Activated B cell treated with CpG ODN at 0.5 μM for 24 hours (primary cell): ENCODE measurements at regions of chr5 and their contacts with region 1.

Region 1: GRCh38 chr5:134411546-134412266 is at the start of gene CDKN2AIPNL:
- DNase-seq: peak; percentile 92
- ATAC-seq: peak; percentile 99
- H3K4me3 Mint-ChIP-seq: peak within 1 kb of the TSS; percentile 95
- H3K27ac Mint-ChIP-seq: peak within 1 kb of the TSS; percentile 85
- H3K4me1 Mint-ChIP-seq: peaks cover 31% of the 10 kb centered on the region
- H3K27me3 Mint-ChIP-seq: no peaks in the 10 kb centered on the region
- CTCF ChIP-seq: no peak
- total RNA-seq, gene CDKN2AIPNL: 21.6 and 22.4 TPM in 2 replicates

Region 2: GRCh38 chr5:134304311-134304710 is 107.4 kb before region 1 on chr5:
- CTCF ChIA-PET with region 1: interaction called, 3 read pairs
- POLR2A ChIA-PET with region 1: no interaction called
- intact Hi-C with region 1: loop called (anchors 10 kb)
- DNase-seq: no peak
- ATAC-seq: no peak
- H3K4me3 Mint-ChIP-seq: no peak overlapping the region
- H3K27ac Mint-ChIP-seq: no peak overlapping the region
- H3K4me1 Mint-ChIP-seq: no peaks in the 10 kb centered on the region
- H3K27me3 Mint-ChIP-seq: no peaks in the 10 kb centered on the region
- CTCF ChIP-seq: no peak

Region 3: DNA sequence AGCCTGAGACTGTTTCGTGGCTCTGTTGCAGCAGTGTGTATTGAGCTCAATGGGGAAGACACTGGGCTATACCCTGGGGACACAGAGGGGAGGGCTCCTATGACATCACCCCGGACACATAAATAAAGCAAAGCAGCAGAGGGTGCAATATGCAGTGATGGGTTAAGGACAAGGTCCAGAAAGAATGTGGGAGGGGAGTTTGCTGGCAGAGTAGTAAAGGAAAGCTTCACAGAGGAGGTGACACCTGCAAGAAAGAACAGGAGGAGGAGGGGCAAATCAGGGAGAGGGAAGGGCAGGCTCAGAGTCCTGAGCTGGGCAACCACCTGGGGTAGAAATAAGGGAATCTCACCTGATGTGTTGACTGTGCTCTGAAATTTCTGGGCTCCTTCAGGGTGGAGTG is 35.2 kb after region 1 on chr5:
- CTCF ChIA-PET with region 1: interaction called, 6 read pairs
- POLR2A ChIA-PET with region 1: interaction called, 5 read pairs
- intact Hi-C with region 1: loop called (anchors 1 kb)
- DNase-seq: peak; percentile 44
- ATAC-seq: peak; percentile 84
- H3K4me3 Mint-ChIP-seq: peak overlapping the region; percentile 13
- H3K27ac Mint-ChIP-seq: peak overlapping the region; percentile 76
- H3K4me1 Mint-ChIP-seq: peaks cover 53% of the 10 kb centered on the region
- H3K27me3 Mint-ChIP-seq: no peaks in the 10 kb centered on the region
- CTCF ChIP-seq: no peak

Region 4: GRCh38 chr5:134555890-134556311 is 144.2 kb after region 1 on chr5:
- CTCF ChIA-PET with region 1: interaction called, 11 read pairs
- POLR2A ChIA-PET with region 1: interaction called, 24 read pairs
- intact Hi-C with region 1: loop called (anchors 1 kb)
- DNase-seq: peak; percentile 75
- ATAC-seq: peak; percentile 73
- H3K4me3 Mint-ChIP-seq: peak overlapping the region; percentile 75
- H3K27ac Mint-ChIP-seq: peak overlapping the region; percentile 98
- H3K4me1 Mint-ChIP-seq: peaks cover 64% of the 10 kb centered on the region
- H3K27me3 Mint-ChIP-seq: no peaks in the 10 kb centered on the region
- CTCF ChIP-seq: no peak

Region 5: GRCh38 chr5:134586866-134587524 is 175.3 kb after region 1 on chr5:
- CTCF ChIA-PET with region 1: interaction called, 20 read pairs
- POLR2A ChIA-PET with region 1: interaction called, 7 read pairs
- intact Hi-C with region 1: loop called (anchors 1 kb)
- DNase-seq: peak; percentile 79
- ATAC-seq: peak; percentile 91
- H3K4me3 Mint-ChIP-seq: peak overlapping the region; percentile 15
- H3K27ac Mint-ChIP-seq: no peak overlapping the region
- H3K4me1 Mint-ChIP-seq: peaks cover 18% of the 10 kb centered on the region
- H3K27me3 Mint-ChIP-seq: no peaks in the 10 kb centered on the region
- CTCF ChIP-seq: peak; percentile 20